Tibial artery (tissue), 4 donors: ENCODE measurements at regions of chr3 and their contacts with region 1.

Region 1: DNA sequence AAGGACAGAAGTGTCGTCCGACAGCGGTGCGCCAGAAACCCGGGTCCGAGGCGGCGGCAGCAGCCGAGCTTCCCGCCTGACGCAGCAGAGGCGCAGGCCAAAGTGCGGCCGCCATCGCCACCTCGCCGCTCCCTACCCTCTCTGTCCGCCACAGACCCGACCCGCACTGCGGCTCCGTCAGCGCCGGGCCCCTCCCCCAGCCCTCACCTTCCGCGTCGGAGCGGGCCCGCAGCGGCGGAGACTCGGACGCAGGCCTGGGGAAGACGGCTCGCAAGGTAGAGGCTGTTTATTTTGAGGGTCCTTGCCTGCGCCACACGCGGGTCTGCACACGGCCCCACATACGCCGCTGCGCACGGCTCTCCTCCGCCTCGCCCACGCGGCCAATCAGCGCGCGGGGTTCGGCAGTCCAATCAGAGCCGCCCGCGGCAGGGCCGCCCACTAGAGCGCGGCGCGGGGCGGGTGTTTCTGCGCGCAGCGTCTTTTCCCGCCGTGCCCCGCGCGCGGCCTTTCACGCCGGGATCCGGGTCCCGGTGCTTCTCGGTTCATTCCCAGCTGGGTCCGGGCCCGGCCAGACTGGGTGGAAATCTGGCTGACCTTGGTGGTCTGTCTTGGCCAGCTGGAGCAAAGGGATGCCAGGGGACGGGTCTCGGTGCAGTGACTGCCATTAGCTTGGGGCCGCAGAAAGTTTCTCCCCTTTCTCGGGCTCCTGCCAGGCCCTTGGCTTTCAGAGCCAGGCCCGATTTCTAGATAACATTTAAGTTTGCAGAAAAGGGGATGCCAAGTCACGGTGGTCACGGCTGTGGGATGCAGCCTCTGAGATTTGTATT is at the start of gene CNBP:
- DNase-seq: peak; percentile 92 to 96
- H3K4me3 ChIP-seq: peak within 1 kb of the TSS; percentile 80 to 96
- H3K27ac ChIP-seq: peak within 1 kb of the TSS; percentile 99 to 100
- H3K4me1 ChIP-seq: peaks cover 0 to 47% (median 23%) of the 10 kb centered on the region in 4 donors
- H3K27me3 ChIP-seq: no peaks in the 10 kb centered on the region
- CTCF ChIP-seq: no peak

Region 2: GRCh38 chr3:129120254-129121004 is 63.4 kb before region 1 on chr3:
- intact Hi-C with region 1: loop called (anchors 10 kb)
- DNase-seq: peak; percentile 91 to 93
- H3K4me3 ChIP-seq: peak overlapping the region; percentile 69 to 94
- H3K27ac ChIP-seq: peak overlapping the region; percentile 95 to 98
- H3K4me1 ChIP-seq: peaks cover 0 to 33% (median 24%) of the 10 kb centered on the region in 4 donors
- H3K27me3 ChIP-seq: no peaks in the 10 kb centered on the region
- CTCF ChIP-seq: peak; percentile 40 to 52

Region 3: DNA sequence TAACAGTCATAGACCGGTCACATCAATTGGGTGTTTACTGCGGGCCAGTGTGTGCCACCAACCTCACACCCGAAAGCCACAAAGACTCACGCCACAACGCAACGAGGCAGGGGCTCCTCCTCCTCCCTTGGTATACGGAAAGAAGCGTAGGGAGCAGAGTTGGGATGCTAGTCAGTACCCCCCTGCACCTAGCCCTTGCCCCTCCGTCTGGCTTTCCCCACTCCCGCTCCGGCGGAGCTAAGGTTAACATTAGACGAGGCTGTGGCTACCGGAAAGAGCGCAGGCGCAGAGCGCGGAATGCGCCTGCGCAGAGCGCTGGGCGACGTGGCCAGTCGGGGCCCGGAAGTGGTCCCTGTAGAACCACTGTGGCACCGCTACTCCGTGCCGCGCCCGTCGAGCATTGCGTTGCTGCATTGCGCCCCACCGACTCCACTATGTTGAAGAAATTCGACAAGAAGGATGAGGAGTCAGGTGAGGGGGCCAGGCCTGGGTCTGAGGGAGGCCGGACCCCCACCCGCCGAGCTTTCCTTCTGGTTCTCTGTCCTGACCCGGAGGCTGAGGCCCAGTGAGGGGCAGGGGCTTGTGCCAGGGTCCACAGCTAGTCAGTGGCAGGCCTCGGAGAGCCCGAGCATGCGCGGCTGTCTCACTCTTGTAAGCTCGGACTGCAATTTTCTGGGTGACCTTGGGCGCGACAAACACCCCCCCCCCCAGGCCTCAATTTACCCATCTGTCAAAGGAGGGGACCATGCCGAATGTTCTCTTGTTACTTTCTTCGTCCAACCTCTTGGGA is 65.7 kb after region 1 on chr3 and contains the start of gene COPG1:
- intact Hi-C with region 1: loop called (anchors 5 kb)
- DNase-seq: peak; percentile 80 to 93
- H3K4me3 ChIP-seq: peak within 1 kb of the TSS; percentile 78 to 84
- H3K27ac ChIP-seq: peak within 1 kb of the TSS; percentile 89 to 90
- H3K4me1 ChIP-seq: peaks cover 0 to 58% (median 37%) of the 10 kb centered on the region in 4 donors
- H3K27me3 ChIP-seq: no peaks in the 10 kb centered on the region
- CTCF ChIP-seq: no peak

Region 4: GRCh38 chr3:129864519-129864918 is 680.7 kb after region 1 on chr3:
- intact Hi-C with region 1: no loop called
- DNase-seq: no peak
- H3K4me3 ChIP-seq: no peak overlapping the region
- H3K27ac ChIP-seq: no peak overlapping the region
- H3K4me1 ChIP-seq: peaks cover 0 to 16% (median 2%) of the 10 kb centered on the region in 4 donors
- H3K27me3 ChIP-seq: no peaks in the 10 kb centered on the region
- CTCF ChIP-seq: no peak